Naive thymus-derived CD4-positive, alpha-beta T cell (primary cell): ENCODE measurements at regions of chr10 and their contacts with region 1.

Region 1: DNA sequence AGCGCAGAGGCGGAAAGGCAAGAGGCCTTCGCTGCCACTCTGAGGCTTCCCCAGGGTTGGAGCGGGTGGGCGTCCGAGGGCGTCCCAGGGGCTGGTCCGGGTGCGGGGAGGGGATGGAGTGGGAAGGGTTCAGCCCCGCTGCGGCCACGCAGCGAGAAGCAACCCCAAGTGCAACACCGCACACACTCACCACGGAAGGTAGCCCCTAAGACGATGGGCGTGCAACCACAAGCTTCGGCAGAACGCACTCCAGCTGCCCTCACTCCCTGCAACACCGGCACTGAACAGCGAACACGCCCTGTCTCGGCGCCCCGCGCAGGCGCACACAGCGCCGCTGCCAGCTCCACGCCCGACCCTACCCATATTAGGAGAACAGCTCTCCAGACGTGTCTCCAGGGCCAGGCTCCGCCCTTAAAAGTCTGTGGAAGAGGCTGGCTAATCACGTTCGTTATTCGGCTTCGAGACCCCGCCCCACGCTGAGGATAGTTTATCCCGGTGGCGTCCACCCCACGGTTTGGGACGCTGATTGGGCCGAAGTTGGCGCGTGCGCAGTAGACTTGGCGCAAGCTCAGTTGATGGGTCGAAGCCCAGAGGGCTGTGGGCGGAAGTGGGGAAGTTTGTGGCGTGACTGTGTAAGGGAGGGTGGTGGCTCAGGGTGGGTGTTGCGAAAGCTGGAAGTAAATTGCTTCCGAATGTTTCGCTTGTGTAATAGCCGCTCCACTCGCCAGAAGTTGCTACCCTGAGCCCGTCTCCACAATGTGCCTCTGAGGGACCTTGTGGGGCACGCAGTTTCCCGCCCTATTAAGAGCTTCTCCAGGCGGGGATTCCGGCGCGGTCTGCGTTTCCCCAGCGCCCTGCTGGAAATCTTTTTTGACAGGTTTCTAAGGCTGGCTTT is at the start of gene RSU1:
- DNase-seq: peak; percentile 99 to 100 (median 100)
- ATAC-seq: peak; percentile 99
- H3K4me3 ChIP-seq: peak within 1 kb of the TSS; percentile 66
- H3K4me3 Mint-ChIP-seq: peak within 1 kb of the TSS; percentile 88 to 98 (median 93)
- H3K27ac ChIP-seq: peak within 1 kb of the TSS; percentile 79
- H3K27ac Mint-ChIP-seq: peak within 1 kb of the TSS; percentile 84 to 96 (median 94)
- H3K4me1 ChIP-seq: peaks cover 8 to 28% of the 10 kb centered on the region in 2 donors
- H3K4me1 Mint-ChIP-seq: peaks cover 25 to 50% (median 46%) of the 10 kb centered on the region in 7 donors
- H3K27me3 ChIP-seq: no peaks in the 10 kb centered on the region
- H3K27me3 Mint-ChIP-seq: peaks cover 0 to 15% (median 0%) of the 10 kb centered on the region in 5 donors
- total RNA-seq, gene RSU1: 36.1 to 86.7 (median 48.7) TPM

Region 2: DNA sequence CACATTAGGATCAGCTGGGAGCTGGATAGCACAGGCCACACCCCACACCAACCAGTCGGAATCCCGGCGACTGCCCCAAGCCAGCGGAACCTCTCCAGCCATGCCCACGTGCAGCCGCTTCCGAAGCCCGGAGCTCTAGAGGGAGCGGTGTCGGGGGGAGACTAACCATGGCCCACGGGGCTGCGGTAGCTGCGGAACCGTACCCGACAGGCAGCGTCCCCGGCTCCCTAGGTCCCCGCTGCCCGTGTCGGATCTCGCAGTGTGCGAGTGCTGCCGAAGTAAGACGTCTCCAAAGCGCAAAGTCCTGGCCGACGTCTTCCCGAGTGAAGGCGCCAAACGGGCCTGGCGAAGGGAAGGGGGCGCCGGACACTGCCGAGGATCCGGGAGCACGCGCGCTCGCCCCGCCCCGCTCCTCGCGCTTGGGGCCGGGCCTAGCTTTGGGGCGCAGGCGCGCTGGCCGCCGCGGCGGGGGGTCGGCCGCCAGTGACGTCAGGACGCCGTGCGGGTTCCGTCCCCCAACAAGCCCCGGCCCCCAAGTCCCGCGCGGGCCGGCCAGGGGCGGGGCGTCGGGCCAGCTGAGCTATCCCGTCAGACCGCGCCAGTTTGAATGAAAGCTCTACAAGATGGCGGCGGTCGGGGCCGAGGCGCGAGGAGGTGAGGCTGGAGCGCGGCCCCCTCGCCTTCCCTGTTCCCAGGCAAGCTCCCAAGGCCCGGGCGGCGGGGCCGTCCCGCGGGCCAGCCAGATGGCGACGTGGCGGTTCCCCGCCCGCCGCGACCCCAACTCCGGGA is 1938.9 kb before region 1 on chr10 and contains the start of gene SUV39H2:
- CTCF ChIA-PET with region 1: no interaction called
- POLR2A ChIA-PET with region 1: no interaction called
- intact Hi-C with region 1: loop called in 1 of 2 experiments (anchors 5 kb)
- DNase-seq: peak; percentile 81 to 97 (median 87)
- ATAC-seq: peak; percentile 93
- H3K4me3 ChIP-seq: peak within 1 kb of the TSS; percentile 92
- H3K4me3 Mint-ChIP-seq: peak within 1 kb of the TSS; percentile 92 to 97 (median 94)
- H3K27ac ChIP-seq: peak within 1 kb of the TSS; percentile 87
- H3K27ac Mint-ChIP-seq: peak within 1 kb of the TSS; percentile 71 to 94 (median 91)
- H3K4me1 ChIP-seq: peaks cover 4 to 7% of the 10 kb centered on the region in 2 donors
- H3K4me1 Mint-ChIP-seq: peaks cover 7 to 46% (median 41%) of the 10 kb centered on the region in 7 donors
- H3K27me3 ChIP-seq: no peaks in the 10 kb centered on the region
- H3K27me3 Mint-ChIP-seq: no peaks in the 10 kb centered on the region
- total RNA-seq, gene SUV39H2: 2.4 to 25.0 (median 6.8) TPM

Region 3: GRCh38 chr10:15802375-15802949 is 1014.9 kb before region 1 on chr10:
- CTCF ChIA-PET with region 1: no interaction called
- POLR2A ChIA-PET with region 1: no interaction called
- intact Hi-C with region 1: no loop called
- DNase-seq: no peak
- ATAC-seq: no peak
- H3K4me3 ChIP-seq: no peak overlapping the region
- H3K4me3 Mint-ChIP-seq: no peak overlapping the region
- H3K27ac ChIP-seq: no peak overlapping the region
- H3K27ac Mint-ChIP-seq: no peak overlapping the region
- H3K4me1 ChIP-seq: no peaks in the 10 kb centered on the region
- H3K4me1 Mint-ChIP-seq: peaks cover 0 to 9% (median 0%) of the 10 kb centered on the region in 7 donors
- H3K27me3 ChIP-seq: no peaks in the 10 kb centered on the region
- H3K27me3 Mint-ChIP-seq: no peaks in the 10 kb centered on the region

Region 4: GRCh38 chr10:15859906-15860691 is 957.3 kb before region 1 on chr10 and contains the start of gene MINDY3:
- CTCF ChIA-PET with region 1: no interaction called
- POLR2A ChIA-PET with region 1: interaction called, 3 read pairs
- intact Hi-C with region 1: loop called (anchors 1 kb)
- DNase-seq: peak; percentile 54 to 86 (median 82)
- ATAC-seq: peak; percentile 94
- H3K4me3 ChIP-seq: peak within 1 kb of the TSS; percentile 97
- H3K4me3 Mint-ChIP-seq: peak within 1 kb of the TSS; percentile 95 to 100 (median 98)
- H3K27ac ChIP-seq: peak within 1 kb of the TSS; percentile 55
- H3K27ac Mint-ChIP-seq: peak within 1 kb of the TSS; percentile 90 to 96 (median 93)
- H3K4me1 ChIP-seq: peaks cover 10 to 22% of the 10 kb centered on the region in 2 donors
- H3K4me1 Mint-ChIP-seq: peaks cover 25 to 53% (median 45%) of the 10 kb centered on the region in 7 donors
- H3K27me3 ChIP-seq: no peaks in the 10 kb centered on the region
- H3K27me3 Mint-ChIP-seq: peaks cover 19 to 24% (median 22%) of the 10 kb centered on the region in 5 donors
- total RNA-seq, gene MINDY3: 21.4 to 43.8 (median 37.4) TPM

Region 5: GRCh38 chr10:16547973-16548372 is 269.4 kb before region 1 on chr10:
- CTCF ChIA-PET with region 1: no interaction called
- POLR2A ChIA-PET with region 1: no interaction called
- intact Hi-C with region 1: no loop called
- DNase-seq: no peak
- ATAC-seq: no peak
- H3K4me3 ChIP-seq: no peak overlapping the region
- H3K4me3 Mint-ChIP-seq: no peak overlapping the region
- H3K27ac ChIP-seq: no peak overlapping the region
- H3K27ac Mint-ChIP-seq: no peak overlapping the region
- H3K4me1 ChIP-seq: no peaks in the 10 kb centered on the region
- H3K4me1 Mint-ChIP-seq: peaks cover 0 to 6% (median 0%) of the 10 kb centered on the region in 7 donors
- H3K27me3 ChIP-seq: no peaks in the 10 kb centered on the region
- H3K27me3 Mint-ChIP-seq: peaks cover 13 to 44% (median 34%) of the 10 kb centered on the region in 5 donors

Region 6: DNA sequence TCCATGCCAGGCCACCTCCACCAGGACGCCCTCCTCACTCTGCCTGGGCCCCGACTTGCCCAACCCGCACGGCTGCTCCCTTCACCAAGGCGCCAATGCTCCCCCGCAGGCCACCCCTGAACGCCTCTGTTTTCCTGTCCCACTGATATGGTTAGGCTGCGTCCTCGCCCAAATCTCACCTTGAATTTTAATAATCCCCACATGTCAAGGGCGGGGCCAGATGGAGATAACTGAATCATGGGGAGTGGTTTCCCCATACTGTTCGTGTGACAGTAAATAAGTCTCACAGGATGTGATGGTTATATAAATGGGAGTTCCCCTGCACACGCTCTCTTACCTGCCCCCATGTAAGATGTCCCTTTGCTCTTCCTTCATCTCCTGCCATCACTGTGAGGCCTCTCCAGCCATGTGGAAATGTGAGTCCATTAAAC is 30.0 kb before region 1 on chr10:
- CTCF ChIA-PET with region 1: interaction called, 4 read pairs
- POLR2A ChIA-PET with region 1: interaction called, 14 read pairs
- intact Hi-C with region 1: loop called (anchors 1 kb)
- DNase-seq: peak; percentile 13 to 75 (median 52)
- ATAC-seq: peak; percentile 97
- H3K4me3 ChIP-seq: no peak overlapping the region
- H3K4me3 Mint-ChIP-seq: peak overlapping the region in 8 of 10 donors; percentile 4 to 56 (median 34)
- H3K27ac ChIP-seq: peak overlapping the region; percentile 65
- H3K27ac Mint-ChIP-seq: peak overlapping the region; percentile 90 to 98 (median 93)
- H3K4me1 ChIP-seq: peaks cover 23 to 24% of the 10 kb centered on the region in 2 donors
- H3K4me1 Mint-ChIP-seq: peaks cover 26 to 42% (median 38%) of the 10 kb centered on the region in 7 donors
- H3K27me3 ChIP-seq: no peaks in the 10 kb centered on the region
- H3K27me3 Mint-ChIP-seq: no peaks in the 10 kb centered on the region

Region 7: GRCh38 chr10:17023386-17024298 is 206.3 kb after region 1 on chr10:
- CTCF ChIA-PET with region 1: no interaction called
- POLR2A ChIA-PET with region 1: no interaction called
- intact Hi-C with region 1: loop called (anchors 1 kb)
- DNase-seq: peak in 8 of 9 donors; percentile 60 to 89 (median 78)
- ATAC-seq: peak; percentile 86
- H3K4me3 ChIP-seq: no peak overlapping the region
- H3K4me3 Mint-ChIP-seq: peak overlapping the region; percentile 5 to 89 (median 64)
- H3K27ac ChIP-seq: peak overlapping the region; percentile 82
- H3K27ac Mint-ChIP-seq: peak overlapping the region; percentile 74 to 99 (median 91)
- H3K4me1 ChIP-seq: peaks cover 46 to 59% of the 10 kb centered on the region in 2 donors
- H3K4me1 Mint-ChIP-seq: peaks cover 32 to 72% (median 67%) of the 10 kb centered on the region in 7 donors
- H3K27me3 ChIP-seq: no peaks in the 10 kb centered on the region
- H3K27me3 Mint-ChIP-seq: peaks cover 0 to 9% (median 0%) of the 10 kb centered on the region in 5 donors

Region 8: GRCh38 chr10:17206210-17206709 is 388.9 kb after region 1 on chr10:
- CTCF ChIA-PET with region 1: no interaction called
- POLR2A ChIA-PET with region 1: interaction called, 9 read pairs
- intact Hi-C with region 1: loop called (anchors 1 kb)
- DNase-seq: peak in 8 of 9 donors; percentile 11 to 79 (median 71)
- ATAC-seq: peak; percentile 79
- H3K4me3 ChIP-seq: no peak overlapping the region
- H3K4me3 Mint-ChIP-seq: peak overlapping the region; percentile 55 to 78 (median 64)
- H3K27ac ChIP-seq: peak overlapping the region; percentile 79
- H3K27ac Mint-ChIP-seq: peak overlapping the region; percentile 88 to 99 (median 96)
- H3K4me1 ChIP-seq: peaks cover 17 to 23% of the 10 kb centered on the region in 2 donors
- H3K4me1 Mint-ChIP-seq: peaks cover 18 to 47% (median 43%) of the 10 kb centered on the region in 7 donors
- H3K27me3 ChIP-seq: no peaks in the 10 kb centered on the region
- H3K27me3 Mint-ChIP-seq: no peaks in the 10 kb centered on the region

Region 9: GRCh38 chr10:18651324-18652007 is 1834.1 kb after region 1 on chr10 and contains the start of gene NSUN6:
- CTCF ChIA-PET with region 1: no interaction called
- POLR2A ChIA-PET with region 1: no interaction called
- intact Hi-C with region 1: loop called (anchors 1 to 5 kb)
- DNase-seq: peak; percentile 82 to 95 (median 95)
- ATAC-seq: peak; percentile 99
- H3K4me3 ChIP-seq: peak within 1 kb of the TSS; percentile 93
- H3K4me3 Mint-ChIP-seq: peak within 1 kb of the TSS; percentile 92 to 99 (median 96)
- H3K27ac ChIP-seq: peak within 1 kb of the TSS; percentile 91
- H3K27ac Mint-ChIP-seq: peak within 1 kb of the TSS; percentile 94 to 99 (median 98)
- H3K4me1 ChIP-seq: peaks cover 3 to 10% of the 10 kb centered on the region in 2 donors
- H3K4me1 Mint-ChIP-seq: peaks cover 10 to 53% (median 47%) of the 10 kb centered on the region in 7 donors
- H3K27me3 ChIP-seq: no peaks in the 10 kb centered on the region
- H3K27me3 Mint-ChIP-seq: peaks cover 0 to 2% (median 0%) of the 10 kb centered on the region in 5 donors
- total RNA-seq, gene NSUN6: 19.6 to 51.8 (median 41.3) TPM